Ascending aorta (tissue), 2 donors: ENCODE measurements at regions of chr15 and their contacts with region 1.

Region 1: DNA sequence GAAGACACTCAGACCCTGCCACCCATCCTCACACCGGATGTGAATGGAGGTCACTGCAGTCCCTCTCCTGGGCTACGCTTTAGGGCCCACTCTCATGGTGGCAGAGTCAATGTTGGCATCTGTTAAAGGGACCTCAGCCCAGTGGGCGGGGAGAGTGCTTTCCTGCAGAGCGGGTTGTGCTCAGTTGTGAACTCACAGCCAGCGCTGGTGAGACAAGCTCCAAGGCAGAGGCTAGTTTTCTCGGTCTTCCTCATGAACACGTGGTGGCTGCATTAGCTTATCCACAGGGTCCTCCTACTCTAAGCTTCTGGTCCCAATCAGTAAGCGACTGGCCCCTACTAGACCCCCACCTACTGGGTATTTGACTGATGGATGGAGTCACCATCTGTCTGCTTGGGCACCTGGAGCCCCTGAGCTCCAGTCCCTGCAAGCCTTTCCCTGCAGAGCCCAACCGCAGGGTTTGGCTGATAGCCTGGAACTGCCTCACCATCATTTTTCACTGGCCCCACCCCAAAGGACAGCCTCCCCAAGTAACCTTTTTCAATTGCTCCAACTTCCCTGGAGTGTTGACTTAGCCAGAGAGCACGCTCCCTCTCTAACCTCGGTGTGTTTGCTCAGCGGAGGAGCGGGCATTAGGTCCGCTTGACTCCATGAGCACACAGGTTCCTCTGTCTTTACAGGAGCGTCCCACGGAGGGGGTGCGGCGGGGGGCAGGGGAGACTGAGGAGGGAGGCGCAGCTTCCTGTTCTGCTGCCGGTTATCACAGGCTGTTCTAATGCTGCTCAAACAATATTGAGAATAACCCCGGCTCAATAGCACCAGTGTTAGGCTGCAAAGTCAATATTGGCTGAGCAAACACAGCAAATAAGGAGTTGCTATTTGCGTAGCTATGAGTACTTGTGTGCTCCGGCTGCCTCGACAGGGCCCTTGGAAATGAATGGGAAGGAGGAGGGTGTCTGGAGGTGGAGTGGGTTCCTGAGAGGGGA is 141.7 kb downstream of the RPLP1 start:
- DNase-seq: peak; percentile 58 to 89
- H3K4me3 ChIP-seq: peak overlapping the region; percentile 18 to 43
- H3K27ac ChIP-seq: peak overlapping the region; percentile 87 to 91
- H3K4me1 ChIP-seq: peaks cover 18 to 38% of the 10 kb centered on the region in 2 donors
- H3K27me3 ChIP-seq: no peaks in the 10 kb centered on the region
- CTCF ChIP-seq: no peak

Region 2: DNA sequence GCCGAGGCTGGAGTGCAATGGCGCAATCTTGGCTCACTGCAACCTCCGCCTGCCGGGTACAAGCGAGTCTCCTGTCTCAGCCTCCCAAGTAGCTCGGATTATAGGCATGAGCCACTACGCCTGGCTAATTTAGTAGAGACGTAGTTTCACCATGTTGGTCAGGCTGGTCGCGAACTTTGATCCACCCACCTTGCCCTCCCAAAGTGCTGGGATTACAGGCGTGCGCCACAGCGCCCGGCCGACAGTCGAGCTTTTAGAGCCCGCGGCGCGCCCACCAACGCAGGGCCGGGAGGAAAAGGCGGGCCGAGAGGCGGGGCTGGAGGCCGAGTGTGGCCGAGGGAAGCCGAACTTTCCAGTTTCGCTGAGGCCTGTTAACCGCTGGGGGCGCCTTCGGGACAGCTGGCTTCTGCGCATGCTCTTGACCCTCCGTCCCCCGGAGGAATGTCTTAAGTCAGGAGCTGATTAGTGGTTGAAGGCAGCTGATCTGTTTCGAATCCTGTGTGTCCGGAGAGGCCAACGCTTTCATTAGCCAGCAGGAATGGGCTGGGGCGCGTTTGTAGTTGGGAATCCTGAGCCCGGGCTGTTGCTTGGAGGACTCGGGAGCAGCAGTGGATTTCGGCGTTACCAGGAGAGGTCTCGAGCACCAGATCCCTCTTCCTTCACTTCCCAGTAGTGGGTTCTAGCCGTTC is 131.6 kb before region 1 on chr15:
- intact Hi-C with region 1: loop called (anchors 10 kb)
- DNase-seq: peak; percentile 87 to 98
- H3K4me3 ChIP-seq: peak overlapping the region; percentile 66 to 67
- H3K27ac ChIP-seq: peak overlapping the region; percentile 81 to 86
- H3K4me1 ChIP-seq: peaks cover 0 to 11% of the 10 kb centered on the region in 2 donors
- H3K27me3 ChIP-seq: no peaks in the 10 kb centered on the region
- CTCF ChIP-seq: peak; percentile 83 to 89 (median 88)

Region 3: GRCh38 chr15:69502470-69503045 is 91.7 kb before region 1 on chr15:
- intact Hi-C with region 1: no loop called
- DNase-seq: peak in 1 of 2 donors; percentile 30
- H3K4me3 ChIP-seq: no peak overlapping the region
- H3K27ac ChIP-seq: no peak overlapping the region
- H3K4me1 ChIP-seq: no peaks in the 10 kb centered on the region
- H3K27me3 ChIP-seq: no peaks in the 10 kb centered on the region
- CTCF ChIP-seq: peak in 1 of 3 experiments; percentile 1

Region 4: DNA sequence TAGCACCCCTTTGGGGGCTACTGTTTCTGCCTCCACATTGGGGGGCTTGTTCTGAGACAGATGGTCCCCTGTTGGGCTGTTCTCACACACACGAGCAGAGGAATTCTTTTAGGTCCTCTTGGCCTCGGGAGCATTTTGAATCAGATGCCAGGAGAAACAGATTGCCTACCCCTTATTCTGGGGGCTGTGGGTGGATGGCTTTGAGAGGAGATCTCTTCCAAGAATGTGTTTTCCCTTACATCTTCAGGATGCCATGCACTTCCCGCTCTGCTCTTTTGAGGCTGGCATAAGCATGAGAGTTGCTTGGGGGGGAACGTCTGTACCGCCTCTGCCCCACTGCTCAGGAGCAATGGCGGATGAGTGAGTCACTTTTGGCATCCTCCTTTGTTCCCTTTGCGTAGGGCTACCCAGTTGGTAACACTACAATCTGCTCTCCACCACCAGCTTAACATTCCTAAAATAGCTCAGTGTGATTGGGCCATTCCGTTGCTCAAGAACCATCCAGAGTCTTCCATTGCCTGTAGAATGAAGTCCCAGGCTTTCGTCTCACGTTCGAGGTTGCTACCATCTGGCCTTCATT is 12.7 kb after region 1 on chr15:
- intact Hi-C with region 1: loop called (anchors 1 kb)
- DNase-seq: peak in 1 of 2 donors; percentile 87
- H3K4me3 ChIP-seq: no peak overlapping the region
- H3K27ac ChIP-seq: peak overlapping the region; percentile 68 to 70
- H3K4me1 ChIP-seq: peaks cover 4 to 15% of the 10 kb centered on the region in 2 donors
- H3K27me3 ChIP-seq: no peaks in the 10 kb centered on the region
- CTCF ChIP-seq: no peak